Panc1 (cell line): ENCODE measurements at regions of chrX and their contacts with region 1.

Region 1: DNA sequence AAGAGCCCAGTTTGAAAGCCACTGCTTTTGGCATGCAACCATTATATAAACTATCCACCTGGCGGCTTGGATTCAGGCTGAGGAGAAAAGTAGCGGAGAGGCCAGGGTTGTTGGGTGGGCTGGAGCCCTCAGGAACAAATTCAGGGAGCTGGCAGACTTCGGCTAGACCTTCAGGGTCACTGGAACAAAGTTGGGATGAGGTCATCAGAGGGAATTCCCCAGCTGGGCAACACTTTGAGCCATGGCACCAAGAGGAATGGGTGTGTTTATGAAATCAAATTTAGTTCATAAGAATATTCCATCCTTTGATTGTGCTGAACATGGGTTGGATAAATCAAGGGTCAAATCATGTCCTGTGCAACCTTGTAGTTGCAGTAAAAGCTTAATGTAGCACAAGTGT is 22.0 kb downstream of the MTMR1 start:
- DNase-seq: no peak
- ATAC-seq: peak; percentile 61; the same call in 1 of the 2 replicates
- H3K4me3 ChIP-seq: no peak overlapping the region
- H3K27ac ChIP-seq: no peak overlapping the region
- H3K4me1 ChIP-seq: 0 out of 2 replicates have a peak, but pooled peaks cover 4% of the 10 kb centered on the region
- H3K27me3 ChIP-seq: no peaks in the 10 kb centered on the region
- CTCF ChIP-seq: no peak

Region 2: GRCh38 chrX:149962859-149963757 is 752.1 kb before region 1 on chrX:
- CTCF ChIA-PET with region 1: no interaction called
- POLR2A ChIA-PET with region 1: no interaction called
- in situ Hi-C with region 1: no loop called
- intact Hi-C with region 1: loop called (anchors 10 kb)
- DNase-seq: peak; percentile 58
- ATAC-seq: peak; percentile 100
- H3K4me3 ChIP-seq: no peak overlapping the region
- H3K27ac ChIP-seq: peak overlapping the region; percentile 66; the same call in 1 of the 2 replicates
- H3K4me1 ChIP-seq: no peaks in the 10 kb centered on the region
- H3K27me3 ChIP-seq: no peaks in the 10 kb centered on the region
- CTCF ChIP-seq: peak; percentile 81

Region 3: DNA sequence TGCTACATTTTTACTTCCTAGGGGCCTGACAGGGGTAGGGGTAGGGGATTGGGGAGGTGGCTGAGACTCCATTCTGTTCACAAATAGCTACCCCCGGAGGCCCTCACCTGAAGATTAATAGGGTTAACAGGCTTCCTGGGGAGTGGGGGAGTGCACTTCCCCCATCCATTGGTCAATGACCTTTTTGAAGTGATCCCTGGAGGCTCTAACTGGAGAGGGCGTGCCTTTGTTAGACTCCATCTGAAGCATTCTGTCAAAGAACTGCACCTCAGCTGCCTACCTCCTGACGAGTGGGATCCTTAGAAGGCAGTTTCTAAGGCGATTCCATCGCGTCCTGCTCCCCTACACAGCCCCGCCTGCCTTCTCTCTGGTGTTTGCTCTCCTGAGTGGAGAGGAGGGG is 156.8 kb before region 1 on chrX:
- CTCF ChIA-PET with region 1: no interaction called
- POLR2A ChIA-PET with region 1: no interaction called
- in situ Hi-C with region 1: no loop called
- intact Hi-C with region 1: no loop called
- DNase-seq: no peak
- ATAC-seq: no peak
- H3K4me3 ChIP-seq: no peak overlapping the region
- H3K27ac ChIP-seq: no peak overlapping the region
- H3K4me1 ChIP-seq: no peaks in the 10 kb centered on the region
- H3K27me3 ChIP-seq: no peaks in the 10 kb centered on the region
- CTCF ChIP-seq: no peak

Region 4: DNA sequence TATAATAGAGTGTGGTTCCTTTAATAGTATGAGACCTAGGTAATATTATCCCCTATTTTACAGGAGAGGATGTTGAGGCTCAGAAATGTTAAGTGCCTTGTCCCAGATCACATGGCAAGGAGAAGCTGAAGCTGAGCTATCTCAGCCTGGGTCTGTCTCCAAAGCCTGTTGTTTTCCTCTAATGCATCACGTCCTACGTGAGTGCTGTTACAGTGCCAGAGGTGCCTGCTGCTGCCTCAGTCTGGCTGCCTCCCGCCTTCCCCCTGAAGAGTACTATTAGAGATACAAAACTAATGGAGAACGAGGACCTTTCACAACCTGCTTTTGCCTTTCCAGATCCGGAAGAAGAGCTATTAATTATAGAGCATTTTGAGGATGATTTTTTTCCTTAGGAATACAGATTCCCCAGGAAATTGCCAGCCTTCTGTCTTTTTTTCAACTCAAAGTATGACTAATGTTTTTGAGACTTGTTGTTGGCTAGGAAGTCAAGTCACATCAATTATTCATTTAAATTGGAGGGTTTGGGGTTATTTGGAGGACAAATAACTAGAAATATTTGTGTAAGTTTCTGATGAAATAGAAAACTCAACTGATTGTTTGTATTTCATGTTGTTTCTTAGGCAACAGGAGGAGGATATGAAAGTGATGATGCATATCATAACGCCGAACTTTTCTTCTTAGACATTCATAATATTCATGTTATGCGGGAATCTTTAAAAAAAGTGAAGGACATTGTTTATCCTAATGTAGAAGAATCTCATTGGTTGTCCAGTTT is 65.9 kb before region 1 on chrX:
- CTCF ChIA-PET with region 1: no interaction called
- POLR2A ChIA-PET with region 1: no interaction called
- in situ Hi-C with region 1: no loop called
- intact Hi-C with region 1: no loop called
- DNase-seq: no peak
- ATAC-seq: no peak
- H3K4me3 ChIP-seq: no peak overlapping the region
- H3K27ac ChIP-seq: no peak overlapping the region
- H3K4me1 ChIP-seq: no peaks in the 10 kb centered on the region
- H3K27me3 ChIP-seq: no peaks in the 10 kb centered on the region
- CTCF ChIP-seq: no peak

Region 5: GRCh38 chrX:150698981-150699380 is 16.2 kb before region 1 on chrX:
- CTCF ChIA-PET with region 1: interaction called, 17 read pairs
- POLR2A ChIA-PET with region 1: no interaction called
- in situ Hi-C with region 1: no loop called
- intact Hi-C with region 1: no loop called
- DNase-seq: no peak
- ATAC-seq: no peak
- H3K4me3 ChIP-seq: no peak overlapping the region
- H3K27ac ChIP-seq: no peak overlapping the region
- H3K4me1 ChIP-seq: no peaks in the 10 kb centered on the region; the same call in 1 of the 2 replicates
- H3K27me3 ChIP-seq: no peaks in the 10 kb centered on the region
- CTCF ChIP-seq: no peak